ENCODE measurements at regions of chr10 and their contacts with region 1.

Region 1: DNA sequence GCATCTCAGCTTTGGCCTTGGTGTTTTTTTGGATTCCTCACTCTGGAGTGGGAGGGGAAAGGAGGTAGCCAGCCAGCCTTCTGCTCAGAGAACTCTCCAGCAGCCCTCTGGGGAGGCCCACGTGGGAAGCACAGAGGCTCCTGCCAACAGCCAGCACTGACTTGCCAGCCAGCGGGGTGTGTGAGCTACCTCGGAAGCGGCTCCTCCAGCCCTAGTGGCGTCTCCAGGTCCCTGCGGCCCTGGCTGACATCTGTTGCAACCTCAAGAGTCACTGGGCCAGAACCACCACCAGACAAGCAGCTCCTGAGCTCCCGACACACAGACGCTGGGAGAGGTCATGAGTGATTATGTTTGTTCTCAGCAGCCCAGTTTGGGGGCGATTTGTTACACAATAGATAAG is 180.2 kb upstream of the FZD8 start:
- DNase-seq: peak; percentile 90
- ATAC-seq: peak; percentile 98

Region 2: GRCh38 chr10:34979938-34980337 is 842.4 kb before region 1 on chr10:
- intact Hi-C with region 1: no loop called
- DNase-seq: no peak
- ATAC-seq: no peak

Region 3: DNA sequence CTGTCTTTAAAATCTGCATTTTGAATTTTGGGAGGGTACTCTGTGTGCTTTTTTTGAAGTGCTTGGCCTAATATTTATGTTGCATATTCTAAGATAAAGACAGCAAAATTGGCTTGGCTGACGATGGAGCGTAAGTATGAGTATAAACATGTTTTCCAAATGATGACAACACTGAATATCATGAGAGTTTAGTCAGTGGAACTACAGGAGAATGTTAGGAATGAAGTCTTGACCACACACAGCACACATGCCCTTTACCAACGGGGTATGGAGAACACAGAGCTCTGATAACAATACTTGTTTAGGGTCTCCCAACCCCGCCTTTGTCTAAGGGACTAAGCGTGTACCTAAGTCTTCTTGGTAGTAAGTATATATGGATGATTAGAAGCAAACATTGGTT is 73.7 kb after region 1 on chr10:
- intact Hi-C with region 1: loop called (anchors 10 kb)
- DNase-seq: no peak
- ATAC-seq: no peak

Measured in Right ventricle myocardium inferior (tissue), 1 donor.